G401 (cell line): ENCODE measurements at regions of chr19 and their contacts with region 1.

Region 1: GRCh38 chr19:16860118-16860517 is 28.7 kb upstream of the F2RL3 start:
- DNase-seq: no peak

Region 2: GRCh38 chr19:16782719-16783118 is 77.4 kb before region 1 on chr19:
- in situ Hi-C with region 1: no loop called
- DNase-seq: no peak

Region 3: DNA sequence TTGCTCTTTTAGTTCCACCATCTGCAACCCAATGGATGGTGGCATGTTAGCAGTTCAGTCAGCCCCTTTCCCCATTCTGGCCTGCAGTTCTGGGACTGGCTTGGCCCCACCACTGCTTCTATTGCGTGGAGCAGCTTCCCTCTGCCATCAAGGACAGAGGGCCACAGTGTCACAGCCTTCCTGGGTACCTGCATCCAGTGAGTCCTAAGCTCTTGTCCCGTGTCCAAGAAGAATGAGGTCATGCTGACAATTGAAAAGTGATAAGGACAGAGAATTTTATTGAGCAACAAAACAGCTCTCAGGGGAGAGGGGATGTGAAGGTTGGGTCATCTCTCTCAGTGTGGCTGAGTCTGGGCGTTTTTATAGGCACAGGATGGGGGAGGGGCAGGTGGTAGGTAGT is 64.4 kb before region 1 on chr19:
- in situ Hi-C with region 1: loop called (anchors 10 kb)
- DNase-seq: no peak